Cardiac septum (tissue), 1 donor: ENCODE measurements at regions of chr5 and their contacts with region 1.

Region 1: DNA sequence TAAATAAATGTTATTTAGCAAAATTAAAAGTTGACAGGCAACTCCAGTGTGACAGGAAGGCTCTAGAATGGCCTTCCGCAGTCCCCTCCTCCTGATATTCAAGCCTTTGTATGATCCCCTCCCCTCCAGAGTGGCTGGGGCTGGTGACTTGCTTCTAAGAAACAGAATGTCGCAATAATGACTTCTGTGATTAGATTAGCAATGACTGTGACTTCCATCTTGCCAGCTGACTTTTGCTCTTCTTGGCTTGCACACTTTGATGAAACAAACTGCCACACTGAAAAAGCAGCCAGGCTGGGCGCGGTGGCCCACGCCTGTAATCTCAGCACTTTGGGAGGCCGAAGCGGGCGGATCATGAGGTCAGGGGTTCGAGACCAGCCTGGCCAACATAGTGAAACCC is 106.5 kb upstream of the LARP1 start:
- DNase-seq: no peak

Region 2: GRCh38 chr5:154811653-154812365 is 163.1 kb after region 1 on chr5:
- intact Hi-C with region 1: loop called (anchors 2 kb)
- DNase-seq: peak; percentile 79